CD14-positive monocyte (primary cell): ENCODE measurements at regions of chr1 and their contacts with region 1.

Region 1: GRCh38 chr1:157580179-157580827 is 17.6 kb downstream of the FCRL4 start:
- DNase-seq: peak; percentile 20 to 50 (median 38)
- H3K4me3 ChIP-seq: no peak overlapping the region
- H3K4me3 Mint-ChIP-seq: peak overlapping the region in 1 of 2 donors; percentile 64
- H3K27ac ChIP-seq: no peak overlapping the region
- H3K27ac Mint-ChIP-seq: no peak overlapping the region
- H3K4me1 ChIP-seq: no peaks in the 10 kb centered on the region
- H3K4me1 Mint-ChIP-seq: peaks cover 1% of the 10 kb centered on the region
- H3K27me3 ChIP-seq: peaks cover 44 to 69% of the 10 kb centered on the region in 2 donors
- H3K27me3 Mint-ChIP-seq: peaks cover 54 to 83% (median 72%) of the 10 kb centered on the region in 3 donors
- CTCF ChIP-seq: peak; percentile 82

Region 2: DNA sequence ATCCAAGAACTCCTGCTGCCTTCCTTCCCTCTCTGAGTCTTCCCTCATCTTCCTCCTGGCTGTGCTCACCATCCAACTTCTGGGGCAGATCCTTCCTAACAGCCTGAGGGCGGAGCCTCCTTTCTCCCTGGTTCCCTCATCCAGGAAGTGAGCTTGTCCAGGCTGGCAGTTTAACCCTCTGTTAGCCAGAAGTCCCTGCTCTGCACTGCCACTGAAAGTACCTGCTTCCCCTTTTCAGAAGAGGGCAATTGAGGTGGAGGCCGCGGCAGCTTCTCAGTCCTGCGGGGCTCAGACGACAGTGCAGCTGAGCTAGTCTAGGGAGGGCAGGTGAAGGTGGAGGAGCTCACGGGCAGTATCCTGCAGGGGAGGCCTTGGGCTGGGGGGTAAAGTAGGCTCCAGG is 177.1 kb before region 1 on chr1:
- intact Hi-C with region 1: no loop called
- DNase-seq: peak; percentile 29 to 49 (median 49)
- H3K4me3 ChIP-seq: peak overlapping the region in 1 of 3 experiments; percentile 9
- H3K4me3 Mint-ChIP-seq: peak overlapping the region; percentile 4 to 72
- H3K27ac ChIP-seq: peak overlapping the region; percentile 83 to 84
- H3K27ac Mint-ChIP-seq: peak overlapping the region; percentile 86 to 94 (median 92)
- H3K4me1 ChIP-seq: peaks cover 59 to 63% of the 10 kb centered on the region in 2 donors
- H3K4me1 Mint-ChIP-seq: peaks cover 70% of the 10 kb centered on the region
- H3K27me3 ChIP-seq: no peaks in the 10 kb centered on the region
- H3K27me3 Mint-ChIP-seq: peaks cover 0 to 2% (median 0%) of the 10 kb centered on the region in 3 donors
- CTCF ChIP-seq: no peak

Region 3: GRCh38 chr1:157682710-157683437 is 102.6 kb after region 1 on chr1:
- intact Hi-C with region 1: loop called in 1 of 2 experiments (anchors 10 kb)
- DNase-seq: no peak
- H3K4me3 ChIP-seq: no peak overlapping the region
- H3K4me3 Mint-ChIP-seq: no peak overlapping the region
- H3K27ac ChIP-seq: no peak overlapping the region
- H3K27ac Mint-ChIP-seq: no peak overlapping the region
- H3K4me1 ChIP-seq: no peaks in the 10 kb centered on the region
- H3K4me1 Mint-ChIP-seq: no peaks in the 10 kb centered on the region
- H3K27me3 ChIP-seq: peaks cover 21 to 39% of the 10 kb centered on the region in 2 donors
- H3K27me3 Mint-ChIP-seq: peaks cover 14 to 36% (median 24%) of the 10 kb centered on the region in 3 donors
- CTCF ChIP-seq: no peak

Region 4: DNA sequence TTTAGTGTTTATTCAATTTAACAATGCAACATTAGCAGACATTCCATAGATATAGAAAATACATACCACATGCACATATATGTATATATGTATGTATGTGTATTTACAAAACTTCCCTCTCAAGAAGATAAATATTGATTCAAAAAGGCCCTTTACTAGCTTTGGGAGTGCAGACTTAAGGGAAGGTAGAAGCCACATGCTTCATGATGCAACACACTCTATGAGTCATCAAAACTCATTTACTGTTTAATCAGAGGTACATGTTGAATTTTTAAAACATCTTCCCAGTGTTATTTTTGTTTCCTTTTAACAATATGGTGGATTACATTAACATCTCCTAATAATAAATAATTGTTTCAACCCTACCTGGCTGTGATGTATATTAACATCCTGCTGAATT is 351.8 kb after region 1 on chr1:
- intact Hi-C with region 1: loop called in 1 of 2 experiments (anchors 10 kb)
- DNase-seq: peak; percentile 42 to 76 (median 67)
- H3K4me3 ChIP-seq: no peak overlapping the region
- H3K4me3 Mint-ChIP-seq: no peak overlapping the region
- H3K27ac ChIP-seq: no peak overlapping the region
- H3K27ac Mint-ChIP-seq: no peak overlapping the region
- H3K4me1 ChIP-seq: peaks cover 3 to 7% of the 10 kb centered on the region in 2 donors
- H3K4me1 Mint-ChIP-seq: peaks cover 3% of the 10 kb centered on the region
- H3K27me3 ChIP-seq: peaks cover 2 to 5% of the 10 kb centered on the region in 2 donors
- H3K27me3 Mint-ChIP-seq: peaks cover 0 to 15% (median 2%) of the 10 kb centered on the region in 3 donors
- CTCF ChIP-seq: no peak

Region 5: GRCh38 chr1:157948312-157949073 is 368.2 kb after region 1 on chr1:
- intact Hi-C with region 1: loop called in 1 of 2 experiments (anchors 5 kb)
- DNase-seq: peak; percentile 42 to 55 (median 54)
- H3K4me3 ChIP-seq: no peak overlapping the region
- H3K4me3 Mint-ChIP-seq: no peak overlapping the region
- H3K27ac ChIP-seq: no peak overlapping the region
- H3K27ac Mint-ChIP-seq: no peak overlapping the region
- H3K4me1 ChIP-seq: peaks cover 23 to 29% of the 10 kb centered on the region in 2 donors
- H3K4me1 Mint-ChIP-seq: peaks cover 38% of the 10 kb centered on the region
- H3K27me3 ChIP-seq: peaks cover 0 to 7% of the 10 kb centered on the region in 2 donors
- H3K27me3 Mint-ChIP-seq: peaks cover 3 to 20% (median 11%) of the 10 kb centered on the region in 3 donors
- CTCF ChIP-seq: peak; percentile 69